Aorta (tissue), 5 donors: ENCODE measurements at regions of chr4 and their contacts with region 1.

Region 1: DNA sequence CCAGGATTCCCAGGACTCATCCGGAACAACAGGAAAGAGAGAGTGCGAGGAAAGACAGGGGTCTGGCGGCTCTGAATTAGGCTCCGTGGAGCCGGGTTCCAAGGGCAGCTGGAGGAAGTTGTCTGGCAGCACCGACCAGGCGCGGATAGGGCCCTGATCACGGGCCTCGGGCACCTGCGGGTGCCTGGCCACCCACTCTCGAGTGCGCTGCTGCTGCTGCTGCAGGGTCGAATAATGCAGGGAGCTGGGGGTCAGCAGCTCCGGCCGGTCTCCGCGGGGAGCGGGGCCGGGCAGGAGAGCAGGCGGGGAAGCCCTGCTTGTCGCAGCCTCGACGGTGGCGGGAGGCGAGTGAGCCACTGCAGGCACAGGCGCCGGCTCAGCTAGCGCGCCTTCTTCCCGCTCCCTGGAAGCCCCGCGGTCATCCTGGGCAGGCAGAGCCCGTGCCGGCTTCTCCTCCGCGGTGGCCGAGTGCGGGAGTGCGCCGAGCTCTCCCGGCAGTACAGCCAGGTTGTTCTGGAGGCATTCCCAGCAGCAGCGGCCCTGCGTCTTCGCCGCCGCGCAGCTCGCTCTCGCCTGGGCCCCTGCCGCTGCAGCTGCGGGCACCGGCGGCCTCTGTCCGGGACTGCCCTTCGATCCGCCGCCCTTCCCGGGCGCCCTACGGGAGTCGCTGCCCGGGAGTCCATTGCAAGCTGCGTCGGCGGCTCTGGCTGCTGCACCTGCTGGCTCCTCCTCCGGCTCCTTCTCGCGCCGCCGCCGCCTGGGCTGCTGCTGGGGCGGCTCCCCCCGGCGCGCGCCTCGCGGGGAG is 1.0 kb downstream of the SOWAHB start:
- DNase-seq: peak; percentile 51 to 78
- ATAC-seq: peak; percentile 39
- H3K4me3 ChIP-seq: peak overlapping the region; percentile 48 to 60
- H3K27ac ChIP-seq: no peak overlapping the region
- H3K4me1 ChIP-seq: no peaks in the 10 kb centered on the region
- H3K27me3 ChIP-seq: no peaks in the 10 kb centered on the region

Region 2: DNA sequence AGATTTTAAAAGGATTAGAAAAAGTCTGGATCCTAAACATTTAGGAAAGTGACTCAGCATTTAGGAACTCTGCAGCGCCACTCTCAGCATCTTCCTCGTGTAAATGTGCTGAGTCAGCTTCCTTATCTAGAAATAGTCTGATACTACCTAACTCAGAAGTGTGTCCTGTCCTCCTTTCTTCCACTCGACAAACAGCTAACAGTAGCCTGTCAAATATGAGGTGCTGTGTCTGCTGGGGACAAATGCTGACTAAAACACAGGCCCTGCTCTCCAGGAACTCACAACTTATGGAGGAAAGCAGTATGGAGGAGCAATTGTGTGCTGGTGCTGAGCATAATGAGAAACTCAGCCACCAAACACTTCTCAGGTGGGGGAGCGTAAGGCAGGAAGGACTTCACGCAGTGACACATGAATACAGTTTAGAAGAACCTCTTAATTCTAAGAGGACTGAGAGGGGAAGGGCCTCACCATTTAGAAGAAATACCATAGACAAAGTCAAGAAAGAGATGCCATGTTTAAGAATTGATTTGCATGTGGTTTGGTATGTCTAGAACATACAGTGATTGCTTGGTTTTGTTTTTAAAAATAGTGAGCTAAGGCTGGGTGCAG is 124.3 kb before region 1 on chr4:
- intact Hi-C with region 1: loop called in 1 of 2 experiments (anchors 10 kb)
- DNase-seq: no peak
- ATAC-seq: no peak
- H3K4me3 ChIP-seq: no peak overlapping the region
- H3K27ac ChIP-seq: peak overlapping the region in 1 of 2 donors; percentile 12
- H3K4me1 ChIP-seq: no peaks in the 10 kb centered on the region
- H3K27me3 ChIP-seq: no peaks in the 10 kb centered on the region

Region 3: GRCh38 chr4:76803522-76803921 is 93.4 kb before region 1 on chr4:
- intact Hi-C with region 1: no loop called
- DNase-seq: no peak
- ATAC-seq: no peak
- H3K4me3 ChIP-seq: no peak overlapping the region
- H3K27ac ChIP-seq: no peak overlapping the region
- H3K4me1 ChIP-seq: no peaks in the 10 kb centered on the region
- H3K27me3 ChIP-seq: no peaks in the 10 kb centered on the region

Region 4: GRCh38 chr4:77007358-77008191 is 110.6 kb after region 1 on chr4:
- intact Hi-C with region 1: no loop called
- DNase-seq: peak in 1 of 2 donors; percentile 67
- ATAC-seq: peak; percentile 75
- H3K4me3 ChIP-seq: no peak overlapping the region
- H3K27ac ChIP-seq: peak overlapping the region in 1 of 2 donors; percentile 74
- H3K4me1 ChIP-seq: peaks cover 9 to 12% of the 10 kb centered on the region in 2 donors
- H3K27me3 ChIP-seq: no peaks in the 10 kb centered on the region